ENCODE measurements at regions of chr18 and their contacts with region 1.

Region 1: DNA sequence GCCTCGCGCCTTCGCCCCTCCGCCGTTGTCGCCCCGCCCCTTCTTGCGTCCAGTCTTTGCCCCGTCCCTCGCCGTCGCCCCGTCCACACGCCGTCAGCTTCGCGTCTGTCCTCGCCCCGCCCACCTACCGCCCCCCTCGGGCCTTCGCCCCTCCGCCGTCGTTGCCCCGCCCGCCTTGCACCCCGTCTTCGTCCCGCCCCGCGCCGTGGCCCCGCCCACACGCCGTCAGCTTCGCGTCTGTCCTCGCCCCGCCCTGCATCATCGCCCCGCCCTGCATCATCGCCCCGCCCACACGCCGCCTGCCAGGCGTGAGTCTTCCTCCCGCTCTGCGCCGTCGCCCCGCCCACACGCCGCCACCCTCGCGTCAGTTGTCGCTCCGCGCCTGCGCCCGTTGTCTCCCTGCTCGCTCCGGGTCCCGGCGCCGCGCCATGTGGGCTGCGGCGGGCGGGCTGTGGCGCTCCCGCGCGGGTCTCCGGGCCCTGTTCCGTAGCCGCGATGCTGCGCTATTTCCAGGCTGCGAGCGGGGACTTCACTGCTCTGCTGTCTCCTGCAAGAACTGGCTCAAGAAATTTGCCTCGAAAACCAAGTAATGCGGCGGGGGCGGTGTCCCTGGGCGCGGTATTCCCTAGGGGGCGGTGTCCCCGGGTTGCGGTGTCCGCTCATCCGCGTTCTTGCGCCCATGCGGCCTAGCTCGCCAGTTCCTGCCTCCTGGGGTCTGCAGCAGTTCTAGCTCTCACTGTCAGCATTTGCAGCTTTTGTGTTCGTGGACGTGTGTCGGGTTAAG is at the start of gene RBFA:
- H3K4me3 Mint-ChIP-seq: peak within 1 kb of the TSS; percentile 82
- H3K27ac Mint-ChIP-seq: peak within 1 kb of the TSS; percentile 95
- H3K4me1 Mint-ChIP-seq: peaks cover 27% of the 10 kb centered on the region
- H3K27me3 Mint-ChIP-seq: peaks cover 1% of the 10 kb centered on the region

Region 2: GRCh38 chr18:79933765-79934164 is 100.5 kb before region 1 on chr18:
- intact Hi-C with region 1: loop called (anchors 5 kb)
- H3K4me3 Mint-ChIP-seq: peak overlapping the region; percentile 56
- H3K27ac Mint-ChIP-seq: peak overlapping the region; percentile 86
- H3K4me1 Mint-ChIP-seq: peaks cover 70% of the 10 kb centered on the region
- H3K27me3 Mint-ChIP-seq: no peaks in the 10 kb centered on the region

Region 3: DNA sequence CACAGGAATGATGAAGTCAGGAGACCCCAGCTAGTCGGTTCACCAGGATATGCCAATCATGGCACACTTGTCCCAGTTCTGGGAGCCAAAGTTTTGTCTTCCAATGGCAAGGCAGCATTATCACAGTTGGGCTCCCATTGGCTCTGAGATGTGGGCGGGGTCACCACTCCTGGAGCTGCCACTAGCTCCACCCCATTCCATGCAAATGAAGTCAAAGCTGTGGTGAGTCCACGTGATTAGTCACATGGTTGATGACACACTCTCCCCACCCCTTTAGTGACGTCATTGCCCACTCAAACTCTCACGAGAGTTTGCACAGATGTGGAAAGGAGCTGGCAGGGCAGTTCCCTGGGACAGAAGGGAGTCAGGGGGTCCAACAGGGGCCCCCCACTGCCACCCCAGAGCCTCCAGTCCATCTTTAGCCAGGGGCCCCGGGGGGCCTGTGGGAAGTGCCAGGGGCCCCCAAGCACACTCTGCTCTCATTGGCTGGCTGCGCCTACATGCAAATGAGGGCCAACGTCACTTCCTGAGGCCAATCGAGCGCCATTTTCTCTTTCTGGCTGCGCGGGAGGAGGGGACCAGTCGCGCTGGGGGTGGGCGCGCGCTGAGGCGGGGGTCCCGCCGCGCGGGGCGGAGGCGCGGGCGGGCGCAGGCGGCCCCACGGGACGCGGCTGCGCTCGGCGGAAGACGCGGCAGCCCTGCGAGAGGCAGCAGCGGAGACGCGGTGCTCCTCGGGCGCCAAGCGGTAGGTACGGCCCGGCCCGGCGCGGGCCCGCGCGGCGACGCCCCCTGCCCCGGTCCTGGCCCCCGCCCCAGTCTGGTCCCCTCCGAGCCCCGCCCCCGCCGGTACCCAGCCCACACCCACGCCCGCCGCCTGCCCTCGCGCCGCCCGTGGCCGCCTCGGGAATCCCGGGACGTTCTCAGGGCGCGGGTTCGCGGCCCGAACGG is 74.7 kb after region 1 on chr18 and contains the start of gene ADNP2:
- intact Hi-C with region 1: loop called (anchors 2 kb)
- H3K4me3 Mint-ChIP-seq: peak within 1 kb of the TSS; percentile 79
- H3K27ac Mint-ChIP-seq: peak within 1 kb of the TSS; percentile 78
- H3K4me1 Mint-ChIP-seq: peaks cover 25% of the 10 kb centered on the region
- H3K27me3 Mint-ChIP-seq: peaks cover 3% of the 10 kb centered on the region

Measured in dendritic cell treated with granulocyte-macrophage colony-stimulating factor and Interleukin-4, amounts not matched to agents 40 ng/mL and 50 ng/mL, for 4 days (primary cell).